Uterus (tissue), 4 donors: ENCODE measurements at regions of chr1 and their contacts with region 1.

Region 1: GRCh38 chr1:26787706-26788514 is at the start of gene PIGV:
- DNase-seq: peak; percentile 84 to 90
- H3K4me3 ChIP-seq: peak within 1 kb of the TSS; percentile 58 to 95
- H3K27ac ChIP-seq: peak within 1 kb of the TSS; percentile 99 to 100
- H3K4me1 ChIP-seq: peaks cover 5 to 6% of the 10 kb centered on the region in 2 donors
- H3K27me3 ChIP-seq: no peaks in the 10 kb centered on the region
- CTCF ChIP-seq: peak in 3 of 4 experiments; percentile 22 to 59 (median 22)
- POLR2A ChIP-seq: peak; percentile 84 to 88
- total RNA-seq, gene PIGV: 9.5 to 20.3 (median 12.4) TPM

Region 2: GRCh38 chr1:26500488-26501175 is 287.3 kb before region 1 on chr1:
- intact Hi-C with region 1: loop called (anchors 10 kb)
- DNase-seq: peak; percentile 83 to 90
- H3K4me3 ChIP-seq: peak overlapping the region; percentile 67 to 70
- H3K27ac ChIP-seq: peak overlapping the region; percentile 89 to 91
- H3K4me1 ChIP-seq: no peaks in the 10 kb centered on the region
- H3K27me3 ChIP-seq: no peaks in the 10 kb centered on the region
- CTCF ChIP-seq: no peak
- POLR2A ChIP-seq: peak; percentile 5 to 68

Region 3: DNA sequence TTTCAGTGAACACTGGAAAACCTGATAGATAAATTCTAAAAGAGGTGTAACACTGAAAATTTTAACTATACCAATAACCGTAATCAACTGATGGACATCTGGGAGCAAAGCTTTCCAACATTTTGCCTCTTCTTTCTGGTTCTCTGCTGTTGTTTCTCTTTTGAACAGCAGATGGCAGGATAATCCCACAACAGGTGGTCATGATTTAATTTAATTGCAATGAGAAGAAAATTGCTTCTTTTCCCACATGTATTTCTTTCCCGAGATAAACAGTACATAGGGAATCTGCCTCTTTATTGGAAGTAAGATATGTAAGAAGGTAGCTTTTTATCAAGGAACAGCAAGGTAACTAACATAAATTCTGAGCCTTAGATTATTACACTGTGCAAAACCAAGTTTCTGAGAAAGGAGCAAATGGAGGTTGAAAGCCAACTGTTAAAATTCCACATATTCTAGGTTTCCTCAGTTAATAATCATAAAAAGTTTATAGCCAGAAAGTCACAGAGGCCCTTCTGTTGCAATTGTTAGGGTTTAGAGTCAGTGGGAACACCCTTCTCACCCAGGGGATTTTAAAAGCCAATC is 185.4 kb before region 1 on chr1:
- intact Hi-C with region 1: loop called (anchors 2 kb)
- DNase-seq: peak in 1 of 2 donors; percentile 65
- H3K4me3 ChIP-seq: no peak overlapping the region
- H3K27ac ChIP-seq: no peak overlapping the region
- H3K4me1 ChIP-seq: no peaks in the 10 kb centered on the region
- H3K27me3 ChIP-seq: no peaks in the 10 kb centered on the region
- CTCF ChIP-seq: peak; percentile 86 to 98 (median 92)
- POLR2A ChIP-seq: no peak

Region 4: DNA sequence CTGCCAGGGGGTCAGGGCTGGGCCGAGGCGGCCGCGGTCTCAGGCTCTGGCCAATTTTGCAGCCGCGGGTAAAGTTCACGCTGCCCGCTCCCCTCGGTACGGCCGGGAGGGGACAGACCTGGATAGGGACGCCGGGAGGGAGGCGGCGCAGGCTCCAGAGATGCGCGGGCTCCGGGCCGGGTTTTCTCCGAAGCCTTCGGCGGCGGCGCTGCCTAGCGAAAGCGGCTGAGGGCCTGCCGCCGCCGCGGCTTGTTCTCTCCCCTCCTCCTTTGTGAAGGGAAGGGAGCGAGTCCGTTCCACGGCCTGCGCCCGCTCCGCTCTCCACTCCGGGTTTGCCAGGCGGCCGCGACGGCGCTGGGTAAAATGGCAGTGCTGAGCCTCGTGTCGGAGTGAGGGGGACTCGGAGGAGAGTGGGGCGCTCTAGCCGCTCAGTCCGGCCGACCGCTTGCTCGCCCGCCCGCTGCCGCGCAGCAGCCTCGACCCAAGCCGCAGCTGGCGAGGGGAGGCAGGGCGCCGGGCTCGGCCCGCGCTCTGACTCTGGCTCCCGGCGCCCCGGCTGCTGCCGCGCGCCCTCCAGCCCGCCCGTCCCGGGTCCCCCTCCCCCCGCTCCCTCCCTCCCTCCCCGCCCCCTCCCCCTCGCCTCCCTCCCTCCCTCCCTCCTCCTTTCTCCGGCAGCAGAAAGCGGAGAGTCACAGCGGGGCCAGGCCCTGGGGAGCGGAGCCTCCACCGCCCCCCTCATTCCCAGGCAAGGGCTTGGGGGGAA is 92.4 kb before region 1 on chr1 and contains the start of gene ARID1A:
- intact Hi-C with region 1: loop called (anchors 2 kb)
- DNase-seq: peak; percentile 95 to 98
- H3K4me3 ChIP-seq: peak within 1 kb of the TSS; percentile 60 to 98
- H3K27ac ChIP-seq: peak within 1 kb of the TSS; percentile 98 to 99
- H3K4me1 ChIP-seq: peaks cover 14 to 16% of the 10 kb centered on the region in 2 donors
- H3K27me3 ChIP-seq: no peaks in the 10 kb centered on the region
- CTCF ChIP-seq: peak in 3 of 4 experiments; percentile 13 to 76 (median 41)
- POLR2A ChIP-seq: peak; percentile 40 to 94
- total RNA-seq, gene ARID1A: 16.7 to 119 (median 41.2) TPM

Region 5: GRCh38 chr1:26754086-26754874 is 33.6 kb before region 1 on chr1:
- intact Hi-C with region 1: no loop called
- DNase-seq: no peak
- H3K4me3 ChIP-seq: no peak overlapping the region
- H3K27ac ChIP-seq: peak overlapping the region; percentile 51 to 56
- H3K4me1 ChIP-seq: peaks cover 0 to 9% of the 10 kb centered on the region in 2 donors
- H3K27me3 ChIP-seq: no peaks in the 10 kb centered on the region
- CTCF ChIP-seq: no peak
- POLR2A ChIP-seq: no peak